GM10248 (cell line): ENCODE measurements at regions of chr11 and their contacts with region 1.

Region 1: GRCh38 chr11:66363805-66364535 is 7.6 kb downstream of the SLC29A2 start:
- DNase-seq: peak; percentile 83
- CTCF ChIP-seq: peak; percentile 90

Region 2: GRCh38 chr11:66268283-66268951 is 95.6 kb before region 1 on chr11 and contains the start of gene RAB1B:
- CTCF ChIA-PET with region 1: no interaction called
- POLR2A ChIA-PET with region 1: no interaction called
- DNase-seq: peak; percentile 98
- CTCF ChIP-seq: no peak

Region 3: DNA sequence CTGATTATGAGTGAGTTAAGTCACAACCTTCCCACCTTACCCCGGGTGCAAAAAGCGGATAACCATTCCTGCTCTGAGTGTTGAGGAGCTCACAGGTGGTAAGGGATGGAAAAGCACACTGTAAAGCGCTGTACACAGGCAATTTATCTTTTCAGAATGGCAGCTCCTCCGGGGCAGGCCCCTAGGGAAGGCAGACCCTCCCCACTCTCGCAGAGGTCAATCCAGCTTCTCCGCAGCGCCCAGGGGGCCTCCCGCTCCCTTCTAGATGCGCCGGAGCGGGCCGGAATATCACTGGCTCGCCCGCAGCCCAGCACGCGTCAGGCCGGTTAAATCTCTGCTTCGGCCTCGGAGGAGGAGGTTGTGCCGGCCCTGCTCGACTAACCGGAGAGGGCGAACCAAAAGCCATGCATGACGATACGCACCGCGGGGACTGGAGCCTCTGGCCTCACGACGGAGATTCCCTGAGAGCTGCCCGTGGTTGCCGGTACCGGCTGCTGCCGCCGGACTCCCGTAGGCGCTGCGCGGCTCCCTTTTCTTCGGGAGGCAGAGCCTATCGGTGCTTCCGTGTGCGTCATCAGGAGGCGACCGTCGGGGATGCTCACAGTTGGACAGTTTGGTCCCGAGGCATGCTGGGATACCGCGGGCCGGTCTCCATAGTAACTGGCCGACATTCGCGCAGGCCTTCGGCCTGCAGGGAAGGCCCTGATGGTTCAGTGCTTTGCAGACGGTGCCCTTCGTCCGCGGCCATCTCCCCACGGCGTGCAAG is 19.2 kb before region 1 on chr11 and contains the start of gene BRMS1:
- CTCF ChIA-PET with region 1: interaction called, 22 read pairs
- POLR2A ChIA-PET with region 1: interaction called, 5 read pairs
- DNase-seq: peak; percentile 96
- CTCF ChIP-seq: no peak